HEK293 (cell line): ENCODE measurements at regions of chr11 and their contacts with region 1.

Region 1: DNA sequence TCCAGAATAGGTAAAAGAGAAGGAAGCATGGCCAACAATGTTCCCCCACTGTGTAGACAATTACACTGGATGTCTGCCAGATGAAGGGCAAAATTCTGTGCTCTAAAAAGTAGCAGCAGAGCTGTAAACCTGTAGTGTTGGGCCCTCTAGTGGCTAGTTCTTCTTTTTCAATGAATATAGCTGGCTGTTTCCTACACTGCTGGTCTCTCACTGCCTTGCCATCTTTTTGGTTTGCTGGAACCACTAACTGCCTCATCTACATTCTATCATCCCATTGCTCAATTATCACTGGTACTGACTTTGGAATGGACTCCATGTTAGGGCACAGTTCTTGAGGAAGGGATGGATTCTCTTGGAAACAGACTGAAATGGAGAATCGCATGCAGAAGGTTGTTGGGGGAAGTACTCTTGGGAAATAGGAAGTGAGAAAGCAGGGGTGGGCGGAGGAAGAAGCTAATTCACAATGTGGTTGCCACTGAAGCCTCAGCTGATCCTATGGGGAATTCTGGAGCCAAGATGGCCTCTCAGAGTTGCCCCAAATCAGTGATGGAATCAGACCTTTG is 17.9 kb downstream of the KCNE3 start:
- H3K4me3 ChIP-seq: no peak overlapping the region
- H3K27ac ChIP-seq: no peak overlapping the region
- H3K4me1 ChIP-seq: no peaks in the 10 kb centered on the region; the same call in 1 of the 2 replicates
- CTCF ChIP-seq: peak; percentile 50; the same call in 1 of the 2 replicates

Region 2: GRCh38 chr11:73963861-73964260 is 485.6 kb before region 1 on chr11:
- CTCF ChIA-PET with region 1: interaction called, 10 read pairs
- POLR2A ChIA-PET with region 1: no interaction called
- H3K4me3 ChIP-seq: no peak overlapping the region
- H3K27ac ChIP-seq: no peak overlapping the region
- H3K4me1 ChIP-seq: no peaks in the 10 kb centered on the region
- CTCF ChIP-seq: no peak

Region 3: GRCh38 chr11:74388678-74389327 is 60.6 kb before region 1 on chr11:
- CTCF ChIA-PET with region 1: interaction called, 142 read pairs
- POLR2A ChIA-PET with region 1: no interaction called
- H3K4me3 ChIP-seq: no peak overlapping the region
- H3K27ac ChIP-seq: no peak overlapping the region
- H3K4me1 ChIP-seq: no peaks in the 10 kb centered on the region
- CTCF ChIP-seq: no peak

Region 4: DNA sequence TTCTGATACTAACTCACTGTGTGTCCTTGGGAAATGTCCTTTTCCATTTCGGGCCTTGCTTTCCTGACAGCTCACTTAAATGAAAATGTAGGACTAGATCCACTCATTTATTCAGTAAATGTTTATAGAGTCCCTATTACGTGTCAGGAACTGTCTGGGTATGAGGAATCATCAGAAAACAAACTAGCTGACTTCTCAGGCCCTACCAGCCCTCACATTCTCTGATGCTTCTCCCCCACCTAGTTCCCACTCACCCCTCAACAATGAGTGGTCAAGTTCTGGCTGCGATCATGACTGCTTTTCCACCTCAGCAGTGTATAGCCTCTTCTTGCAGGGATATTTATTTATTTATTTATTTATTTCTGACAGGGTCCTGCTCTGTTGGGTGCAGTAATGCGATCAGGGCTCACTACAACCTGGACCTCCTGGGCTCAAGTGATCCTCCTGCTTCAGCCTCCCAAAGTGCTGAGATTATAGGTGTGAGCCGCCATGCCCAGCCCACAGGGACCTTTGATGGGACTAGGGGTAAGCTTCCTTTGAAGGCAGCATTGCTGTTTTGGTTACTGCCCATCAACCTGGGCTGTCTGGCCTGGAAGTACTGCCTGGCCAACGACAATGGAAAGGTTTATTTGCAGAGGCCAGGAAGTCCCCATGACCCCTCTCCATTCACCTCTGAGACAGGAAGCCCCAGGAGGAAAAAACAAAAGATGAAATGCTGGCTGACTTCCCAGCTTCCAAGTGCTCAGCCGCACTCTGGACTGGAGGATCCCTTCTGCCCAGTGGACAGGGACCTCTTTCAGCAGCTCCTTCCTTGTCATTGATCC is 109.9 kb after region 1 on chr11:
- CTCF ChIA-PET with region 1: interaction called, 15 read pairs
- POLR2A ChIA-PET with region 1: no interaction called
- H3K4me3 ChIP-seq: no peak overlapping the region
- H3K27ac ChIP-seq: no peak overlapping the region
- H3K4me1 ChIP-seq: no peaks in the 10 kb centered on the region
- CTCF ChIP-seq: no peak

Region 5: DNA sequence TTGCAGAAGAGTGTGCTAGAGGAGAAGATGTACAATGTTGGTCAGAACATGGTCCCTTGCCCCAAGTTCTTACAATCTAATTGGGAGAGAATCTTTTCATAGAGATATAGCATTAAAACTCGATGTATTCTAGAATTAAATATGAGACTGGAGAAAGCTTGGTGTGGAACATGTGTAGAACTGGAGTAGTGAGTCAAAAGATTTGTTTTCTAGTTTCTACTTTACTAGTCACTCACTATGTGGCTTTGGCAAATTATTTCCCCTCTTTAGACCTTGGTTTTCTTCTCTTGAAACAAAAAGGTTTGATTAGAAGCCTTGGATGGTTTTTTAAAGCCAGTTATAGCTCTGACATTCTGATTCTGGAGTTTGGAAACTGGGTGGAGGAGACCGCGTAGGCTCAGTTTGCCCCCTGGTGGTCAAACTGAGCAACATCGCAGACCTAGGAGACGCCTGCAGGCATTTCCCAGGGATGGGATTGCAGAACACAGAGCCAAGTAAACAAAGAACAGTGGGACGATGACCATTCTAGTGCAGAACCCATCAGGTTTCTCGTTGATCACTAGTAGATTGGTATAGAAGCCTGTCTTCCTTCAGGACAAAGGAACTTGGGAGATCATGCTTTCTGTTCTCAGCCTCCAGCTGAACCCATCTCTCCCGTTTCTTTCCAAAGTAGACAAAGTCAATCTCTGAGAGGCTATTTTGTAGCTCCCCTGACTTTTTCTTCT is 290.3 kb after region 1 on chr11:
- CTCF ChIA-PET with region 1: interaction called, 15 read pairs
- POLR2A ChIA-PET with region 1: no interaction called
- H3K4me3 ChIP-seq: no peak overlapping the region
- H3K27ac ChIP-seq: no peak overlapping the region
- H3K4me1 ChIP-seq: no peaks in the 10 kb centered on the region
- CTCF ChIP-seq: peak; percentile 44; the same call in 1 of the 2 replicates